Activated B cell treated with CpG ODN at 0.5 μM for 24 hours (primary cell): ENCODE measurements at regions of chr4 and their contacts with region 1.

Region 1: GRCh38 chr4:85747882-85748491 is 273.0 kb downstream of the ARHGAP24 start:
- DNase-seq: no peak
- ATAC-seq: peak; percentile 73
- H3K4me3 Mint-ChIP-seq: no peak overlapping the region
- H3K27ac Mint-ChIP-seq: peak overlapping the region; percentile 41
- H3K4me1 Mint-ChIP-seq: peaks cover 73% of the 10 kb centered on the region
- H3K27me3 Mint-ChIP-seq: no peaks in the 10 kb centered on the region
- CTCF ChIP-seq: peak; percentile 28

Region 2: GRCh38 chr4:85228264-85228663 is 519.7 kb before region 1 on chr4:
- CTCF ChIA-PET with region 1: no interaction called
- POLR2A ChIA-PET with region 1: no interaction called
- intact Hi-C with region 1: loop called (anchors 5 kb)
- DNase-seq: no peak
- ATAC-seq: no peak
- H3K4me3 Mint-ChIP-seq: no peak overlapping the region
- H3K27ac Mint-ChIP-seq: no peak overlapping the region
- H3K4me1 Mint-ChIP-seq: no peaks in the 10 kb centered on the region
- H3K27me3 Mint-ChIP-seq: peaks cover 6% of the 10 kb centered on the region
- CTCF ChIP-seq: no peak

Region 3: GRCh38 chr4:85474818-85475630 is 273.0 kb before region 1 on chr4 and contains the start of gene ARHGAP24:
- CTCF ChIA-PET with region 1: interaction called, 22 read pairs
- POLR2A ChIA-PET with region 1: interaction called, 7 read pairs
- intact Hi-C with region 1: loop called (anchors 1 kb)
- DNase-seq: peak; percentile 79
- ATAC-seq: peak; percentile 89
- H3K4me3 Mint-ChIP-seq: peak within 1 kb of the TSS; percentile 99
- H3K27ac Mint-ChIP-seq: peak within 1 kb of the TSS; percentile 99
- H3K4me1 Mint-ChIP-seq: peaks cover 52% of the 10 kb centered on the region
- H3K27me3 Mint-ChIP-seq: no peaks in the 10 kb centered on the region
- CTCF ChIP-seq: no peak
- total RNA-seq, gene ARHGAP24: 155 and 231 TPM in 2 replicates

Region 4: DNA sequence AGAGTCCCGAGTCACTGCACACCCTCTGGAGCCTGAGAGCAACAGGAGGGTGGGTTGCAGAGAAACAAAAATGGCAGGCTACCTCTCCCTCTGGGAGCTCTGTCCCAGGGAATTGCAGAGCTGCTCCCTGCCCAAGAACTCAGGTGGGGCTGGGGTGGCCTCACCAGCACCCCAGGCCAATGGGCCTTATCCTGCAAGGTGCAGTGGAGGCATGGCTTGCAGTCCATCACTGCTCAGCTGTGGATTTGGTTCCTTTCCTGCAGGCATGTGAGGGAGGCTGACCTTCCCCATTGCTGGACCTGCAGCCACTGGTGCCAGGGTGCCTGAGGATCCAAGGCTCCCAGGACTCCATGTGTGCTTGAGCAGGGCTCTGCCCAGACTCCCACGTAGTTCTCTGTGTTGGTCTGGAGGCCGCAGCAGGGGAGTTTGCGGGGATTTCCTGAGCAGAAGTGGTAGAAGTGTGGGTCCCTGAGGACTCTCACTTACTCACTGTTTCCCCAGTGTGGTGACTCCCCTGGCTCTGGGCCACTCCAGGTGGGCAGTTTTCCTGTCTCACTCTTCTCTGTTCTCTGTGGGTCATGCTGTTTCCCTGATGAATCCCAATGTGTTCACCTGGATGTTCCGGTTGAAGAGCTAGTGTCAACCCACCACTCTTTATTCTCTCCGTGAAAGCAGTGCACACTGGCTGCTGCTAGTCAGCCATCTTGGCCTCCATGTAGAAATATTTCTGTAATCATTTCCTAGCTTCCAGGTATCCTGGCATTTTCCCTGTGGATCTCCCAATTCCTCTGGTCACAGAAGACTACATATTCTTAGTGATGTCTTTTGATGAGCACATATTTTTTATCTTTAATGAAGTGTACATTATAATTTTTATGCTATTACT is 190.7 kb before region 1 on chr4:
- CTCF ChIA-PET with region 1: interaction called, 20 read pairs
- POLR2A ChIA-PET with region 1: no interaction called
- intact Hi-C with region 1: no loop called
- DNase-seq: peak; percentile 83
- ATAC-seq: peak; percentile 84
- H3K4me3 Mint-ChIP-seq: peak overlapping the region; percentile 61
- H3K27ac Mint-ChIP-seq: peak overlapping the region; percentile 96
- H3K4me1 Mint-ChIP-seq: peaks cover 80% of the 10 kb centered on the region
- H3K27me3 Mint-ChIP-seq: no peaks in the 10 kb centered on the region
- CTCF ChIP-seq: no peak

Region 5: GRCh38 chr4:85672116-85672515 is 75.9 kb before region 1 on chr4:
- CTCF ChIA-PET with region 1: interaction called, 11 read pairs
- POLR2A ChIA-PET with region 1: no interaction called
- intact Hi-C with region 1: no loop called
- DNase-seq: no peak
- ATAC-seq: no peak
- H3K4me3 Mint-ChIP-seq: peak overlapping the region; percentile 17
- H3K27ac Mint-ChIP-seq: peak overlapping the region; percentile 46
- H3K4me1 Mint-ChIP-seq: peaks cover 79% of the 10 kb centered on the region
- H3K27me3 Mint-ChIP-seq: no peaks in the 10 kb centered on the region
- CTCF ChIP-seq: no peak

Region 6: GRCh38 chr4:85968945-85969819 is 221.2 kb after region 1 on chr4:
- CTCF ChIA-PET with region 1: interaction called, 3 read pairs
- POLR2A ChIA-PET with region 1: no interaction called
- intact Hi-C with region 1: loop called (anchors 2 kb)
- DNase-seq: no peak
- ATAC-seq: no peak
- H3K4me3 Mint-ChIP-seq: no peak overlapping the region
- H3K27ac Mint-ChIP-seq: no peak overlapping the region
- H3K4me1 Mint-ChIP-seq: peaks cover 10% of the 10 kb centered on the region
- H3K27me3 Mint-ChIP-seq: no peaks in the 10 kb centered on the region
- CTCF ChIP-seq: no peak